Natural killer cell (primary cell): ENCODE measurements at regions of chr12 and their contacts with region 1.

Region 1: GRCh38 chr12:14769969-14770495 is 33.2 kb downstream of the WBP11 start:
- DNase-seq: peak; percentile 89 to 95
- ATAC-seq: peak; percentile 52 to 71 (median 58)
- H3K4me3 ChIP-seq: peak overlapping the region; percentile 70
- H3K4me3 Mint-ChIP-seq: peak overlapping the region; percentile 96
- H3K27ac ChIP-seq: peak overlapping the region; percentile 93
- H3K27ac Mint-ChIP-seq: peak overlapping the region; percentile 99
- H3K4me1 ChIP-seq: peaks cover 39% of the 10 kb centered on the region
- H3K4me1 Mint-ChIP-seq: peaks cover 75% of the 10 kb centered on the region in 2 donors
- H3K27me3 ChIP-seq: no peaks in the 10 kb centered on the region
- H3K27me3 Mint-ChIP-seq: no peaks in the 10 kb centered on the region
- CTCF ChIP-seq: peak; percentile 84

Region 2: DNA sequence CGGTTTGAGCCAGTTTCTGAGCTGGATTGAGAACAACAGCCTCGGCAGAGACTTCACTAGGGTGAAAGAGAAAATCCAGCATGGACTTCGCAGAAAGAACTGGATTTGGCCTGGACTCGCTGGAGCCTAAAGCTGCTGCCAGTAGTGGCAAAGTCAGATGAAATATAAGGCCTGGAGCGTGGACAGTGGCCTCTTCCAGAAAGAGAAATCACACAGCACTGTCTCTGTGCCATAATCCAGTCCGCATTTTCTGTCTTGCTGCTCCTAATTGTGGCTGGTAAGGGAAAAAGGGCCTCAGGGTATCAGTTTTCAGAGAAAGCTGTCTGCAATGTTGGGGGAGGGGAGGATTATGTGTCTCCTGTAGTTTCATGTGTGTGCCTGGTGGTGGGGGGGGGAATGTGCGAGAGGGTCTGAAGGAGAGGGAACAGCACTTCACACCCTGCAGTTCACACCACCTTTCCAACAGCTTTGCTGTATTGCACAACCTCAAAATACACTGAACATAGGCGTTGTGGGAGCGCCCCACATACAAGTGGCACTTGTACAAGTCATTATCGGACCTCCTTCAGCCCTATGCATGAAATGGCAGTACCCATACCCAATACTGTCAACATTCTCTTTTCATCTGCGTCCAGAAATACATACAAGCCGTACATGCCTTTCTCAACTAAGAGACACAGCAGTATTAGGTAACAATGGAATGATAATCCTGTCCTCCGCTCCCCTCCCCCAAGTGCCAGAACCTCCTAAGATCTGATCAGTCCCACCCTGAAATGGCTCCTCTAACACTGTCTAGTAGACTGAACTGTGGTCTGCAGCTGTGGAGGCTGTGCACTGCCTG is 512.1 kb before region 1 on chr12:
- intact Hi-C with region 1: loop called (anchors 2 kb)
- DNase-seq: peak; percentile 83 to 89
- ATAC-seq: peak; percentile 62 to 79 (median 75)
- H3K4me3 ChIP-seq: no peak overlapping the region
- H3K4me3 Mint-ChIP-seq: peak overlapping the region; percentile 87
- H3K27ac ChIP-seq: peak overlapping the region; percentile 93
- H3K27ac Mint-ChIP-seq: peak overlapping the region; percentile 95 to 96
- H3K4me1 ChIP-seq: peaks cover 39% of the 10 kb centered on the region
- H3K4me1 Mint-ChIP-seq: peaks cover 46 to 50% of the 10 kb centered on the region in 2 donors
- H3K27me3 ChIP-seq: no peaks in the 10 kb centered on the region
- H3K27me3 Mint-ChIP-seq: no peaks in the 10 kb centered on the region
- CTCF ChIP-seq: no peak

Region 3: DNA sequence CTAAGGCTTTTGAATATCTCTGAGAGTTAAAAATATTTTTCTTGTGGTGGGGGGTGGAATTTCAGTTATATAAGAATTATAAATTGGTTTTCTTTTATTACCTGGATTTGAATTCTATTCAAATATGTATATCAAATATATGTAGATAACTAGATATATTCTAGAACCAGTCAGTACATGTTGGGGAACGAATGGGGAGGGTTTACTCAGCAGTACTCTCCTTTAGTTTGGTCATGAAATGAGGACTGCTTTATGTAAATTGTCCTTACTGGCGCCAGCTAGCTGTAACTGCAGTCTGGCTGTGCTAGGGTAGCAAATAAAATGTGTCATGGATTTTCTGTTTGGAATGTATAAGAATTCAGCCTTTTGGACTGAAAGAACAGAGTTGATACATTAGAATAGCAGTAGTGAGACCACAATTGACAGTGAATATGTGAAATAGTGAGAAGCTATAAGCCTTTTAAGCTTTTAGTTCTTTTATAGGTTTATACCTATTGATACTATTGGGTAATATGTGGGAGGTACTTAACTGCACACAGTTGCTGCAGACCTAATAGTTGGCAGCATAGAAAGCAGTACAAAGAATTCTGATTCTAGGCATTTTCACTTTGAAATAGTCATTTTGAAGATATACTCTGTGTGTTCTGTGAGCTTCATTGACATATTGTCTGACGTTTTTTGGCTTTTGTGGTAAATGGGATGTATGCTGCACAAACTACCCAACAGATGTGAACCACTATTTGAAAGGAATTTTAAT is 375.5 kb before region 1 on chr12:
- intact Hi-C with region 1: loop called (anchors 1 kb)
- DNase-seq: peak in 1 of 2 donors; percentile 83
- ATAC-seq: peak; percentile 55 to 73 (median 63)
- H3K4me3 ChIP-seq: peak overlapping the region; percentile 9
- H3K4me3 Mint-ChIP-seq: peak overlapping the region; percentile 92
- H3K27ac ChIP-seq: peak overlapping the region; percentile 85
- H3K27ac Mint-ChIP-seq: peak overlapping the region; percentile 85 to 93
- H3K4me1 ChIP-seq: peaks cover 25% of the 10 kb centered on the region
- H3K4me1 Mint-ChIP-seq: peaks cover 54 to 80% of the 10 kb centered on the region in 2 donors
- H3K27me3 ChIP-seq: no peaks in the 10 kb centered on the region
- H3K27me3 Mint-ChIP-seq: no peaks in the 10 kb centered on the region
- CTCF ChIP-seq: no peak

Region 4: DNA sequence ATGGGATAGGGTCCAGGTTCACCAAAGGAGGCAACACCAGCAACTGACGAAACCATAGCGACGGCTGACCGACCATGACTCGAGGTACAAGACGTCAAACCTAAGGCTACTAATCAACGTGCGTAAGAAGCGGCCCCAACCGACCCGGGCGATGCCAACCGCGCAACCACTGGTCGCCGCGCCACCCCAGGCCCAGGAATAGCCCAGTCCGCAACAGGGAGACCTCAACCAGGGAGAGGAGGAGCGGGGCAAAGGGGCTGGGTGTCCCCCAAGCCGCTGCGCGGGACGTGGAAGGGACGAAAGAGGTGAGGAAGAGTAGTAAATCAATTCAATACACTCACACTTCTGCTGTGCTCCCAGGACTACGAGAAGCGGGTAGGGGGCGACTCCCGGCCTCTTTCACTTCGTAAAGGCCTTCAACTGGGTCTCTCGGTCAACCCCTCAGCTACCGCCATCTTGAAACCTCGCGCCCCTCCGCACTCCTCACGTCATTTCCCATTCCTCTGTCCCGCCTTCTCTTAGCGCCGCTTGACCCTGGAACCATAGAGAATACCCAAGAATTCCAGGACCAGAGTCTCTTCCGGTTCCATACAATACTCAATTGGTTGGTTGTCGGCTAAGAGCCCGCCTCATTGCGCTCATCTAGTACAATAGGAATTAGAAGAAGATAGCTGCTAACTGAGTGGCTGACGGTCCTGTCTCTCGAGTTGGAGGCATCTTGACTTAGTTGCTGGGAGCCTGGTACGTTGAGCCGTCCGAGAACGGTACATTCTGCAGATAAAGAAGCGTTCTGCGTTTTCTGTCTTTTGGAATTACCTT is 33.2 kb after region 1 on chr12 and contains the starts of genes C12orf60 and WBP11:
- intact Hi-C with region 1: loop called (anchors 1 kb)
- DNase-seq: peak; percentile 79 to 96
- ATAC-seq: peak; percentile 88 to 98 (median 94)
- H3K4me3 ChIP-seq: peak within 1 kb of the TSS; percentile 92
- H3K4me3 Mint-ChIP-seq: no peak within 1 kb of the TSS
- H3K27ac ChIP-seq: peak within 1 kb of the TSS; percentile 98
- H3K27ac Mint-ChIP-seq: no peak within 1 kb of the TSS
- H3K4me1 ChIP-seq: peaks cover 10% of the 10 kb centered on the region
- H3K4me1 Mint-ChIP-seq: peaks cover 0 to 15% of the 10 kb centered on the region in 2 donors
- H3K27me3 ChIP-seq: no peaks in the 10 kb centered on the region
- H3K27me3 Mint-ChIP-seq: no peaks in the 10 kb centered on the region
- CTCF ChIP-seq: no peak
- total RNA-seq, gene C12orf60: 0.28 to 0.79 (median 0.33) TPM
- total RNA-seq, gene WBP11: 130 to 159 (median 134) TPM

Region 5: GRCh38 chr12:14948672-14949071 is 178.6 kb after region 1 on chr12:
- intact Hi-C with region 1: loop called (anchors 2 kb)
- DNase-seq: peak in 1 of 2 donors; percentile 89
- ATAC-seq: peak; percentile 77 to 93 (median 87)
- H3K4me3 ChIP-seq: no peak overlapping the region
- H3K4me3 Mint-ChIP-seq: peak overlapping the region; percentile 80
- H3K27ac ChIP-seq: peak overlapping the region; percentile 81
- H3K27ac Mint-ChIP-seq: peak overlapping the region; percentile 94 to 95
- H3K4me1 ChIP-seq: peaks cover 41% of the 10 kb centered on the region
- H3K4me1 Mint-ChIP-seq: peaks cover 86 to 91% of the 10 kb centered on the region in 2 donors
- H3K27me3 ChIP-seq: no peaks in the 10 kb centered on the region
- H3K27me3 Mint-ChIP-seq: no peaks in the 10 kb centered on the region
- CTCF ChIP-seq: no peak